ENCODE measurements at regions of chr11 and their contacts with region 1.

Region 1: GRCh38 chr11:27234043-27234668 is 128.9 kb downstream of the CCDC34 start:
- DNase-seq: peak; percentile 91
- ATAC-seq: peak; percentile 95
- H3K4me3 ChIP-seq: no peak overlapping the region
- H3K27ac ChIP-seq: peak overlapping the region; percentile 56
- H3K4me1 ChIP-seq: peaks cover 3% of the 10 kb centered on the region; the same call in 1 of the 2 replicates
- H3K27me3 ChIP-seq: no peaks in the 10 kb centered on the region
- CTCF ChIP-seq: 0 out of 6 replicates have a peak, but pooled peaks of 1 of the 3 experiments have one; percentile 6
- EP300 ChIP-seq: peak; percentile 94 to 97
- POLR2A ChIP-seq: no peak
- RAD21 ChIP-seq: no peak

Region 2: GRCh38 chr11:27183672-27184457 is 50.3 kb before region 1 on chr11:
- CTCF ChIA-PET with region 1: interaction called, 31 read pairs
- POLR2A ChIA-PET with region 1: interaction called, 3 read pairs
- RAD21 ChIA-PET with region 1: interaction called, 39 read pairs
- SMC1A ChIA-PET with region 1: interaction called, 18 read pairs
- in situ Hi-C with region 1: no loop called
- intact Hi-C with region 1: loop called (anchors 10 kb)
- DNase-seq: peak; percentile 12
- ATAC-seq: peak; percentile 80
- H3K4me3 ChIP-seq: no peak overlapping the region
- H3K27ac ChIP-seq: no peak overlapping the region
- H3K4me1 ChIP-seq: no peaks in the 10 kb centered on the region
- H3K27me3 ChIP-seq: no peaks in the 10 kb centered on the region
- CTCF ChIP-seq: peak; percentile 57 to 76 (median 59)
- EP300 ChIP-seq: no peak
- POLR2A ChIP-seq: no peak
- RAD21 ChIP-seq: peak; percentile 91

Region 3: DNA sequence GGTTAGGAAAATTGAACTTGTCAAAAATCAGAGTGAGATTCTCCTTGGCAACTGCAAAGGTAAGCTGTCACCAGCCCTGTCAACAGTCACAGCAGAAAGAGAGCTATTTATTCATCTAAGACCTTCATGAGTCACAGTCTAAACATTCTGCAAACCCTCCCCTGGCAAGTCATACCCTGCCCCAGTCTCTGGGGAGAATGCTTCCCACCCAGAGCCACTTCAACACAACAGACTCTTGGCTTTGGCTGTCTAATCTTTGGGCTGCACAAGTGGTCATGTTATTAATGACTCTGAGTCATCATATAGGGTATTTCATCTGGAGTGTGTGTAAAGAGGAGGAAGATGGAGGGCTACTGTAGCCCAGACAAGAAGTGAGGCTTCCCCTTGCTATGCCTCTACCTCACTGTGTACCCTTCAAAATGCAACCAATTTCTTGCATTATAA is 24.6 kb before region 1 on chr11:
- CTCF ChIA-PET with region 1: interaction called, 58 read pairs
- POLR2A ChIA-PET with region 1: interaction called, 16 read pairs
- RAD21 ChIA-PET with region 1: interaction called, 73 read pairs
- SMC1A ChIA-PET with region 1: interaction called, 189 read pairs
- in situ Hi-C with region 1: no loop called
- intact Hi-C with region 1: loop called (anchors 2 kb)
- DNase-seq: no peak
- ATAC-seq: peak; percentile 65
- H3K4me3 ChIP-seq: no peak overlapping the region
- H3K27ac ChIP-seq: no peak overlapping the region
- H3K4me1 ChIP-seq: no peaks in the 10 kb centered on the region
- H3K27me3 ChIP-seq: no peaks in the 10 kb centered on the region
- CTCF ChIP-seq: no peak
- EP300 ChIP-seq: no peak
- POLR2A ChIP-seq: no peak
- RAD21 ChIP-seq: no peak

Region 4: GRCh38 chr11:27362749-27363575 is 128.8 kb after region 1 on chr11 and contains the start of gene CCDC34:
- CTCF ChIA-PET with region 1: interaction called, 3 read pairs
- POLR2A ChIA-PET with region 1: no interaction called
- RAD21 ChIA-PET with region 1: interaction called, 3 read pairs
- SMC1A ChIA-PET with region 1: no interaction called
- in situ Hi-C with region 1: no loop called
- intact Hi-C with region 1: loop called (anchors 5 kb)
- DNase-seq: peak; percentile 48
- ATAC-seq: peak; percentile 99
- H3K4me3 ChIP-seq: peak within 1 kb of the TSS; percentile 81
- H3K27ac ChIP-seq: peak within 1 kb of the TSS; percentile 69
- H3K4me1 ChIP-seq: peaks cover 3% of the 10 kb centered on the region; the same call in 1 of the 2 replicates
- H3K27me3 ChIP-seq: no peaks in the 10 kb centered on the region
- CTCF ChIP-seq: no peak
- EP300 ChIP-seq: no peak
- POLR2A ChIP-seq: peak; percentile 78
- RAD21 ChIP-seq: no peak
- polyA plus RNA-seq, gene CCDC34: 6.2 to 13.4 TPM

Region 5: GRCh38 chr11:27506200-27507182 is 272.3 kb after region 1 on chr11 and contains the start of gene LIN7C:
- CTCF ChIA-PET with region 1: no interaction called
- POLR2A ChIA-PET with region 1: no interaction called
- RAD21 ChIA-PET with region 1: no interaction called
- SMC1A ChIA-PET with region 1: no interaction called
- in situ Hi-C with region 1: no loop called
- intact Hi-C with region 1: loop called (anchors 2 kb)
- DNase-seq: peak; percentile 80
- ATAC-seq: peak; percentile 94
- H3K4me3 ChIP-seq: peak within 1 kb of the TSS; percentile 95
- H3K27ac ChIP-seq: peak within 1 kb of the TSS; percentile 92
- H3K4me1 ChIP-seq: peaks cover 4% of the 10 kb centered on the region; the same call in 1 of the 2 replicates
- H3K27me3 ChIP-seq: no peaks in the 10 kb centered on the region
- CTCF ChIP-seq: peak in 1 of 3 experiments; percentile 20; a peak in 1 of 6 replicates
- EP300 ChIP-seq: no peak
- POLR2A ChIP-seq: peak; percentile 99
- RAD21 ChIP-seq: no peak
- polyA plus RNA-seq, gene LIN7C: 6.0 to 23.7 TPM

Region 6: GRCh38 chr11:27735281-27735680 is 501.1 kb after region 1 on chr11:
- CTCF ChIA-PET with region 1: no interaction called
- POLR2A ChIA-PET with region 1: no interaction called
- RAD21 ChIA-PET with region 1: no interaction called
- SMC1A ChIA-PET with region 1: no interaction called
- in situ Hi-C with region 1: no loop called
- intact Hi-C with region 1: no loop called
- DNase-seq: no peak
- ATAC-seq: no peak
- H3K4me3 ChIP-seq: no peak overlapping the region
- H3K27ac ChIP-seq: no peak overlapping the region
- H3K4me1 ChIP-seq: no peaks in the 10 kb centered on the region
- H3K27me3 ChIP-seq: no peaks in the 10 kb centered on the region
- CTCF ChIP-seq: no peak
- EP300 ChIP-seq: no peak
- POLR2A ChIP-seq: no peak
- RAD21 ChIP-seq: no peak

Measured in GM12878 (cell line).